ENCODE measurements at regions of chr12 and their contacts with region 1.

Region 1: DNA sequence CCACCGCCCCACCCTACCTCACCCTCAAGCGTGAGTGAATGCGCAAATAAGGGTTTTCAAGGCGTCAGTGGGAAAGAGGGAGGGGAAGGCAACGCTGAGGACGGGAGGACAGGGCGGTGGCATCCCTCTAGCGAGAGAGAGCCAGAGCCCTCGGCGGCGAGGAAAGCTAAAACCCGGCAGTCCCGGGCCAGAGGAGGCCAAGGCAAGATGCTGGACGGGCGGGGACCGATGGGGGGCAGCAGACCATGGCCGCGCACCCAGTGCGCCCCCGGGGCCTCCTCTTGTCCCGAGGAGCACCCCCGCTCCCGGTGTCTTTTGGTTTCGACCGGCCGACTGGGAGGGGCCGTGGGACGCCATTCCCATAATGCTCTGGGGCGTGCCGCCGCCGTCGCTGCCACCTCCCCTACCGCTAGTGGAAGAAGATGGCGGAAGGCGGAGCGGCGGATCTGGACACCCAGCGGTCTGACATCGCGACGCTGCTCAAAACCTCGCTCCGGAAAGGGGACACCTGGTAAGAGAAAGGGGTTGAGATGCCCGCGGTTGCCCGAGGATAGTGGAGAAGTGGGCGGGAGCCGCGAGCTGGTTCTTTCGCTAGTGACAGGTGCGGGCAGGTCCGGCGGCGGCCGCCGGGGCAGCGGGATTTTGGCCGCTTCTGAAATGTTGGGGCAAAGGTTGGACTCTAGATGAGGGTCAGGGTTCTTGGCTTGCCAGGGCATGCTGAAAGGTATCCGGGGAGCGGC is at the start of gene USP15:
- DNase-seq: peak; percentile 92 to 96 (median 96)
- ATAC-seq: peak; percentile 91
- H3K4me3 ChIP-seq: peak within 1 kb of the TSS; percentile 96
- H3K4me3 Mint-ChIP-seq: peak within 1 kb of the TSS; percentile 90 to 100 (median 96)
- H3K27ac ChIP-seq: peak within 1 kb of the TSS; percentile 98
- H3K27ac Mint-ChIP-seq: peak within 1 kb of the TSS; percentile 97 to 99 (median 98)
- H3K4me1 ChIP-seq: peaks cover 46 to 49% of the 10 kb centered on the region in 2 donors
- H3K4me1 Mint-ChIP-seq: peaks cover 28 to 69% (median 62%) of the 10 kb centered on the region in 7 donors
- H3K27me3 ChIP-seq: no peaks in the 10 kb centered on the region
- H3K27me3 Mint-ChIP-seq: peaks cover 0 to 3% (median 0%) of the 10 kb centered on the region in 5 donors
- total RNA-seq, gene USP15: 156 to 224 (median 180) TPM

Region 2: DNA sequence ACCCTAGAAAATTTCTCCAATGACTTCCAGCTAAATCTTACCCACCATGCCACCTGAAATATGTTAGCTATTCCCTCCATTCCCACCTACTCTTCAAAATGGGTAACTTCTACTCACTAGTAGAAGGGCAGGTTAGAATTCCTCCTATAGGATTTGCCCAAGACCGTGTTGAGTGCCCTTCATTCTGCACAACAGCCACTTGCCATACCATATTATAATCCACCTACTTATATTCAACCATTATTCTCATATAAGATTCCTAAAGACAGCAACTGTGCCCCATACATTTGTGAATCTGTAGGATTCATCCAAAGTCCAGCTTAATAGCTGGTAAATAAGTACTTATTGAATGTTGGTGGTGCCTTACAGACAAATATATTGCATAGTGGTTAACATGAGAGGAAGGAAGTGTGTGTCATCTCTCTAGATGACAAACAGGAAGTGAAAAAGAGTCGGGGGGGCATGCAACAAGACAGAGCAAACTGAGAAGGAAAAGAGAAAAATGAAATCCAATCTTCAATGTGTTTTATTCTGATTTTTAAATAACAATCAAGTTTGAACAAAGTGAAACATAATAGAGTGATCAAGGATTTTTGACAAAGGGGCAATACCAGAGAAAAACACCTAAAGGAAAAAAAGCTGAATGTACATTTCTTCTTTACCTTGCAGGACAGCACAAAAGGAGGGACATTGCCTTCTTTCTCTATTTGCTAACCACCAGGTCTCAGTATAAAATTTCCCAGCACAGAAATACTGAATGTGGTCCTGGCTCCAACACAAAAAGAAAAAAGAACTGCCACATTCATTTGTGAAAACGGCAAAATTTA is 389.3 kb before region 1 on chr12:
- CTCF ChIA-PET with region 1: no interaction called
- POLR2A ChIA-PET with region 1: no interaction called
- intact Hi-C with region 1: loop called in 1 of 2 experiments (anchors 5 kb)
- DNase-seq: peak in 7 of 9 donors; percentile 5 to 45 (median 25)
- ATAC-seq: peak; percentile 79
- H3K4me3 ChIP-seq: no peak overlapping the region
- H3K4me3 Mint-ChIP-seq: no peak overlapping the region
- H3K27ac ChIP-seq: no peak overlapping the region
- H3K27ac Mint-ChIP-seq: no peak overlapping the region
- H3K4me1 ChIP-seq: peaks cover 0 to 10% of the 10 kb centered on the region in 2 donors
- H3K4me1 Mint-ChIP-seq: peaks cover 0 to 7% (median 3%) of the 10 kb centered on the region in 7 donors
- H3K27me3 ChIP-seq: no peaks in the 10 kb centered on the region
- H3K27me3 Mint-ChIP-seq: peaks cover 0 to 11% (median 0%) of the 10 kb centered on the region in 5 donors

Region 3: DNA sequence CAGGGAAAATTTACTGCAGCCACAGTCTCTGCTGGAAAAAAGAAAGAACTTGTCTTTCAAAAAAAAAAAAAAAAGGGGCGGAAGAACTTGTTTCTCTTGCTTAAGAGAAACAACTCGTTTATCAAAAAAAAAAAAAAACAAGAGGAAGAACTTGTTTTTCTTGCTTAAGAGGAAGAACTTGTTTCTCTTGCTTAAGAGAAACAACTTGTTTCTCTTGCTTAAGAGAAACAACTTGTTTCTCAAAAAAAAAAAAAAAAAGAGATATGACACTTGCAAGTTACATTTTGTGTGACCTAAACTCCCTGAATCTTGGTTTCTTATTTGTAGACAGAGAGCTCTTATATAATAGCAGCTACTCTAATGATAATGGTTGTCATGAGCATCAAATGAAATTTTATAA is 44.7 kb before region 1 on chr12:
- CTCF ChIA-PET with region 1: interaction called, 3 read pairs
- POLR2A ChIA-PET with region 1: interaction called, 12 read pairs
- intact Hi-C with region 1: loop called in 1 of 2 experiments (anchors 1 kb)
- DNase-seq: peak in 3 of 9 donors; percentile 31 to 49 (median 45)
- ATAC-seq: no peak
- H3K4me3 ChIP-seq: no peak overlapping the region
- H3K4me3 Mint-ChIP-seq: peak overlapping the region; percentile 16 to 80 (median 66)
- H3K27ac ChIP-seq: no peak overlapping the region
- H3K27ac Mint-ChIP-seq: peak overlapping the region; percentile 57 to 90 (median 74)
- H3K4me1 ChIP-seq: peaks cover 0 to 22% of the 10 kb centered on the region in 2 donors
- H3K4me1 Mint-ChIP-seq: peaks cover 11 to 57% (median 39%) of the 10 kb centered on the region in 7 donors
- H3K27me3 ChIP-seq: no peaks in the 10 kb centered on the region
- H3K27me3 Mint-ChIP-seq: peaks cover 0 to 14% (median 0%) of the 10 kb centered on the region in 5 donors

Region 4: GRCh38 chr12:62379026-62379722 is 119.0 kb after region 1 on chr12:
- CTCF ChIA-PET with region 1: no interaction called
- POLR2A ChIA-PET with region 1: interaction called, 3 read pairs
- intact Hi-C with region 1: loop called in 1 of 2 experiments (anchors 2 kb)
- DNase-seq: no peak
- ATAC-seq: no peak
- H3K4me3 ChIP-seq: no peak overlapping the region
- H3K4me3 Mint-ChIP-seq: peak overlapping the region in 2 of 10 donors; percentile 1 to 6
- H3K27ac ChIP-seq: no peak overlapping the region
- H3K27ac Mint-ChIP-seq: peak overlapping the region in 8 of 9 donors; percentile 13 to 83 (median 64)
- H3K4me1 ChIP-seq: no peaks in the 10 kb centered on the region
- H3K4me1 Mint-ChIP-seq: peaks cover 13 to 45% (median 30%) of the 10 kb centered on the region in 7 donors
- H3K27me3 ChIP-seq: no peaks in the 10 kb centered on the region
- H3K27me3 Mint-ChIP-seq: no peaks in the 10 kb centered on the region

Region 5: GRCh38 chr12:62603061-62603810 is 343.1 kb after region 1 on chr12:
- CTCF ChIA-PET with region 1: no interaction called
- POLR2A ChIA-PET with region 1: interaction called, 8 read pairs
- intact Hi-C with region 1: loop called (anchors 1 kb)
- DNase-seq: peak; percentile 68 to 89 (median 84)
- ATAC-seq: peak; percentile 75
- H3K4me3 ChIP-seq: peak overlapping the region; percentile 93
- H3K4me3 Mint-ChIP-seq: peak overlapping the region; percentile 77 to 97 (median 92)
- H3K27ac ChIP-seq: peak overlapping the region; percentile 99
- H3K27ac Mint-ChIP-seq: peak overlapping the region; percentile 99 to 100 (median 99)
- H3K4me1 ChIP-seq: peaks cover 12% of the 10 kb centered on the region in 2 donors
- H3K4me1 Mint-ChIP-seq: peaks cover 10 to 43% (median 29%) of the 10 kb centered on the region in 7 donors
- H3K27me3 ChIP-seq: no peaks in the 10 kb centered on the region
- H3K27me3 Mint-ChIP-seq: no peaks in the 10 kb centered on the region

Region 6: DNA sequence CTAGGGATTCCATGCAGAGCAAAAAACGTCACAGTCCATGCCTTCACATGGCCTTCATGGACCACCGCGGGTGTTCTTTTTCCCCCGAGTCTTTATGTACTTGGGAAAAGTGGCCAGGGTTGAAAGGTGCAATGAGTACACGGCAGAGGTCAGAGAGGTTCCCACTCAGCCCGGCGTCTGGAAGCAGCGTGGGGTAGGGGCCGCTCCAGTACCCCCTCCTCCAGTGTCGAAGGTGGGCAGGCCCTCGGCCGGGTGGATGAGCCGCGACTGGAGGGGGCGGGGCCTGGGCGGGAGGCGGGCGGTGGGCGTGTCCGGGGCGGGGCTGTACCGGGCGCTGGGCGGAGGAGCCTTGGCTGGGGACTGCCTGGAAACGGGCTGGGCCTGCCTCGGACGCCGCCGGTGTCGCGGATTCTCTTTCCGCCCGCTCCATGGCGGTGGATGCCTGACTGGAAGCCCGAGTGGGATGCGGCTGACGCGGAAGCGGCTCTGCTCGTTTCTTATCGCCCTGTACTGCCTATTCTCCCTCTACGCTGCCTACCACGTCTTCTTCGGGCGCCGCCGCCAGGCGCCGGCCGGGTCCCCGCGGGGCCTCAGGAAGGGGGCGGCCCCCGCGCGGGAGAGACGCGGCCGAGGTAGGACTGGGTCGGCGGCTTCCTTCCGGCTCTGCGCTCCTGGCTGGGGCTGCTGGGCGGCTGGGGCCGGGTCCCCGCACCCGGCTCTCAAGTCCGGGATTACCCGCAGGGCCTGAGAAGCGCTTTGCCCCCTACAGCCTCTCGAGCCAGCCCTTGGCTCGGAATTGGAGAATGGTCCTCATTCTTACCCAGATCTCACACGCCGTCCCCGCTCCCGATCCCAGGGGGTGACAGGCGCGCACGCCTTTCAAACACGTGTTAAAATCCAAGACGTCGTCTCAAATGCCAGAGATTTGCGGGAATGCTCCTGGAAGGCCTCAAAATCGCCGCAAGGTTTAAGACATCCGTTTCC is 1519.6 kb after region 1 on chr12 and contains the start of gene RXYLT1:
- CTCF ChIA-PET with region 1: no interaction called
- POLR2A ChIA-PET with region 1: no interaction called
- intact Hi-C with region 1: loop called in 1 of 2 experiments (anchors 2 kb)
- DNase-seq: peak; percentile 68 to 85 (median 77)
- ATAC-seq: peak; percentile 98
- H3K4me3 ChIP-seq: peak within 1 kb of the TSS; percentile 72
- H3K4me3 Mint-ChIP-seq: peak within 1 kb of the TSS; percentile 91 to 99 (median 96)
- H3K27ac ChIP-seq: peak within 1 kb of the TSS; percentile 88
- H3K27ac Mint-ChIP-seq: peak within 1 kb of the TSS; percentile 89 to 98 (median 94)
- H3K4me1 ChIP-seq: peaks cover 3 to 13% of the 10 kb centered on the region in 2 donors
- H3K4me1 Mint-ChIP-seq: peaks cover 6 to 48% (median 25%) of the 10 kb centered on the region in 7 donors
- H3K27me3 ChIP-seq: no peaks in the 10 kb centered on the region
- H3K27me3 Mint-ChIP-seq: peaks cover 0 to 3% (median 0%) of the 10 kb centered on the region in 5 donors
- total RNA-seq, gene RXYLT1: 9.9 to 22.0 (median 15.4) TPM

Measured in naive thymus-derived CD4-positive, alpha-beta T cell (primary cell).